Lower leg skin (tissue), 4 donors: ENCODE measurements at regions of chr17 and their contacts with region 1.

Region 1: GRCh38 chr17:7056386-7056785 is 12.5 kb upstream of the SLC16A11 start:
- DNase-seq: no peak
- H3K4me3 ChIP-seq: no peak overlapping the region
- CTCF ChIP-seq: no peak
- POLR2A ChIP-seq: no peak

Region 2: DNA sequence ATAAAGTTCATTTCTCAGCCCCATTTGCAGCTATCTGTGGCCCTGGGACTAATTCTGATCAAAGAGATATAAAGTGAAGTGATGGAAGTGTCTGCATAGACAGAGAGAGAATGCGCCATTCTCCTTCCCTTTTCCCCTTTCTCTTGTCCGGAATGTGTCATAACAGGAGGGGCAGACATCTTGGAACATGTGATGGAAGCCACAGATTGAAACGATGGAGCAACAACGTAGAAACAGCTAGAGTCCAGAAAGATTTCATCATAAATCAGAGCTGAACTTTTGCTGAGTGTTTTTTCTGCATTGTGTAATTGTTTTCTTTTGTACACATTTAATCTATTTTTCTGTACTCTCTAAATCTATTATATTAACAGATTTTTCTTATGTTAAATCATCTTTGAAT is 111.4 kb after region 1 on chr17:
- intact Hi-C with region 1: loop called (anchors 10 kb)
- DNase-seq: no peak
- H3K4me3 ChIP-seq: no peak overlapping the region
- CTCF ChIP-seq: no peak
- POLR2A ChIP-seq: no peak